Natural killer cell (primary cell): ENCODE measurements at regions of chr12 and their contacts with region 1.

Region 1: DNA sequence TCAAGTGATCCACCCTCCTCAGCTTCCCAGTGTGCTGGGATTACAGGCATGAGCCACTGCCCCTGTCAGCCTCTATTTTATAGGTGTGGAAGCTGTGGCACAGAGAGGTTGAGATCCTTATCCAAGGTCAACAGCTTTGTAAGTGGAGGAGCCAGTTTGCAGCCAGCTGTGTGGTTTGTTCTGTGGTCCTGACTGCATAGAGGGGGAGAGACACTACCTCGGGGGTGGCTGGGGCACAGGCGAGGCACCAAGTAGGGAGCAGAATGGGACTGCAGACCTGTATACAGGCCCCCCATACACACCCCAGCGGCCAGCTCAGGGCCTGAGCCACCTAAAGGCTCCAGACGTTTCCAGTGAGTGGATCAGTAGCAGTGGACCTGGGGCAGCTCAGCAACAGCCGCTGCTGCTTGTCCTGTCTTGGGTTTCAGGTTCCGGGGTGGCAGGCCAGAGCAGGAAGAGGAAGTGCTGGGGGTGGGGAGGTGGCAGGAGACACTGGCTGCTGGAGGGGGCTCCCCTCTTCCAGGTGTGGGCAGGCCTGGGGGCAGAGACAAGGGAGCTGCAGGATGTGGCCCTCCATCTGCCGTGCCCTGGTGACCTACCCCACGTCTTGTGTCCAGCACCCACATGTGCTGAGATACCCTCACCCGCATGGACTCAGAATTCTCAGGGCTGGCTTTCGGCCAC is 11.0 kb downstream of the ORAI1 start:
- DNase-seq: peak; percentile 47 to 73
- ATAC-seq: peak; percentile 78 to 87 (median 82)
- H3K4me3 ChIP-seq: no peak overlapping the region
- H3K4me3 Mint-ChIP-seq: peak overlapping the region; percentile 80
- H3K27ac ChIP-seq: peak overlapping the region; percentile 70
- H3K27ac Mint-ChIP-seq: peak overlapping the region; percentile 87 to 95
- H3K4me1 ChIP-seq: peaks cover 56% of the 10 kb centered on the region
- H3K4me1 Mint-ChIP-seq: peaks cover 38 to 49% of the 10 kb centered on the region in 2 donors
- H3K27me3 ChIP-seq: no peaks in the 10 kb centered on the region
- H3K27me3 Mint-ChIP-seq: no peaks in the 10 kb centered on the region
- CTCF ChIP-seq: no peak

Region 2: GRCh38 chr12:121649819-121650353 is 12.5 kb after region 1 on chr12:
- intact Hi-C with region 1: loop called (anchors 1 kb)
- DNase-seq: peak in 1 of 2 donors; percentile 81
- ATAC-seq: peak; percentile 73 to 87 (median 86)
- H3K4me3 ChIP-seq: no peak overlapping the region
- H3K4me3 Mint-ChIP-seq: peak overlapping the region; percentile 78
- H3K27ac ChIP-seq: peak overlapping the region; percentile 41
- H3K27ac Mint-ChIP-seq: peak overlapping the region; percentile 73 to 86
- H3K4me1 ChIP-seq: peaks cover 35% of the 10 kb centered on the region
- H3K4me1 Mint-ChIP-seq: peaks cover 17 to 41% of the 10 kb centered on the region in 2 donors
- H3K27me3 ChIP-seq: no peaks in the 10 kb centered on the region
- H3K27me3 Mint-ChIP-seq: no peaks in the 10 kb centered on the region
- CTCF ChIP-seq: no peak